ENCODE measurements at regions of chr13 and their contacts with region 1.

Region 1: DNA sequence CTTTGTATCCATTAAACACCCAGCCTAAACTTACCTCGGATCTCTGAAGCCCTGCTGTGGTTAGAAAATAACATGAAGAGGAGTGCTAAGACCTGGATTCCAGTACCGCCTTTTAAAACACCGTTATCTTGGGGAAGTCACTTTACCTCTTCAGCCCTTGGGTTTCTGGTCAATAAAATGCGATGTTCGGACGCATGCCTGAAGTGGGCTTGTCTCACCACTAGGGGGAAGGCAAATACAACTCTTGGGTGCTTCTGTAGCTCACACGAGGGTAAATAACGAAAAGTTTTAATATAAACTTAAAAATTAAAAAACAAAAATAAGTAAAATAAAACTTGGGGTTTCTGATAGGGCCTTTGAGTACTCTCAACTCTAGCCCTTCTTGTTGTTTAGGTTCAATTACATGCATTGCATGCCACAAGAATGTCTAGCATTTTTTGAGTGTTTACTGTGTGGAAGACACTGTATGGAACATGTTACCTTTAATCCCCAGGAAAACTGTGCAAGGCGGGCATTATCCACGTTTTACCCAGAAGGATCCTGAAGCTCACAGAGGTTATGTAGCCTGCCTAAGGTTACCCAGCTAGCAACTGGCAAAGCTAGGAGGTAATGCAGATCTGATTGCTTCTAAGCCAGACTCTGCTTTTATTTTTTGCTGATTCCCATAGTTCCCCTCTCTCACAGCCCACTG is 240.4 kb downstream of the LMO7 start:
- DNase-seq: no peak
- H3K4me3 ChIP-seq: no peak overlapping the region
- CTCF ChIP-seq: peak; percentile 79

Region 2: GRCh38 chr13:75864718-75865117 is 11.8 kb before region 1 on chr13:
- CTCF ChIA-PET with region 1: interaction called, 10 read pairs
- POLR2A ChIA-PET with region 1: no interaction called
- DNase-seq: no peak
- H3K4me3 ChIP-seq: no peak overlapping the region
- CTCF ChIP-seq: no peak

Region 3: DNA sequence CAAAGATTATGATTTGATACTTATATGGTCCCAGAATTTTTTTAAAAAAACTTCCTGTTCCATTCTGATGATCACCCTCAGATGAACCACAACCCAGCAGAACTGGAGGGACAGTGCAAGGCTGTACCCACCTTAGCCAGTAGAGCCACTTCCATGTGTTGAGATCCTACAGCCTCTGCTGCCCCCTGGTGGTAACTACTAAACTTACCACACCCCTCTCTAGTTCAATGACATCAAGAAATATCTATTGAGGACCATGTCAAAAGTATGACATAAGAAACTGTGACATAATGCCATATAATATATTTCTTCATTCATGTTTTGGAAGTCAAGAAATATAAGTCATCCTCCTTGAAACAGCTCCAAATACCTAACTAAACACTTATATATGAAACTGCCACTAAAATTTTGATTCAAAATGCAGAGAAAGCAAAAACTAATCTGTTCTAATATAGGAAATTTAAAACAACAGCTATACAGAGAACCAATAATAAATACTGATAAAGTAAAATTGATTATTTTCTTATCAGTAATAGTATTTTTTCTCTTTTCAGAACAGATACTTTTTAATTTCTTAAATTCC is 597.1 kb after region 1 on chr13:
- CTCF ChIA-PET with region 1: interaction called, 252 read pairs
- POLR2A ChIA-PET with region 1: no interaction called
- DNase-seq: peak; percentile 12
- H3K4me3 ChIP-seq: no peak overlapping the region
- CTCF ChIP-seq: peak; percentile 79

Region 4: DNA sequence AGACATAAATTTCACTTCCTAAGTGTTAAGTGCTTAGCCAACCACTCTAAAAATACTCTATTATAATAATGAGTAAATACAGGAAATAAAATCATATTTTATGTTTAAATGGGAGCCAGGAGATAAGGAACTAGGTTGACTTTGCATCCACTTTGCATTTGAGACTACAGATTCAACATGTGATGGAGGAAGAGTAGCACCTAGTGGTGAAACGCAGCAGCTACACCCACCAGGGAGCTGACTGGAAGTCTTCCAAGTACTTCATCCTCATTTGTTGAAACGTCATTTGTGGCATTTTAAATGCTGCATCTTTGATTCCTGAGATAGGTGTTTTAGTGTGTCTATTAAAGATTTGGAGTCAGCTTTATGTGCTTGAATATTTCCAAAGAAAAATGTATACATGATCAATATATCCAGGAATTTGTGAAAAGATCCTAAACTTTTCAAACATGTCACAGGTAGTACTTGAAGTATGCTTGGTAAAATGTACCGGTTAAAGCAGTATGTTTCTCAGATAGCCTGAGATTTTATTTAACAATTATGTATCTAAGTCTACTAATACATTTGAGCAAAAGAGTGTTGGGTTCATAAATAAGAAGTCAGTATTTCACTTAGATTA is 1027.1 kb after region 1 on chr13:
- CTCF ChIA-PET with region 1: interaction called, 15 read pairs
- POLR2A ChIA-PET with region 1: no interaction called
- DNase-seq: peak; percentile 41
- H3K4me3 ChIP-seq: no peak overlapping the region
- CTCF ChIP-seq: peak; percentile 96

Measured in AG04449 (cell line).